ENCODE measurements at regions of chr12 and their contacts with region 1.

Region 1: DNA sequence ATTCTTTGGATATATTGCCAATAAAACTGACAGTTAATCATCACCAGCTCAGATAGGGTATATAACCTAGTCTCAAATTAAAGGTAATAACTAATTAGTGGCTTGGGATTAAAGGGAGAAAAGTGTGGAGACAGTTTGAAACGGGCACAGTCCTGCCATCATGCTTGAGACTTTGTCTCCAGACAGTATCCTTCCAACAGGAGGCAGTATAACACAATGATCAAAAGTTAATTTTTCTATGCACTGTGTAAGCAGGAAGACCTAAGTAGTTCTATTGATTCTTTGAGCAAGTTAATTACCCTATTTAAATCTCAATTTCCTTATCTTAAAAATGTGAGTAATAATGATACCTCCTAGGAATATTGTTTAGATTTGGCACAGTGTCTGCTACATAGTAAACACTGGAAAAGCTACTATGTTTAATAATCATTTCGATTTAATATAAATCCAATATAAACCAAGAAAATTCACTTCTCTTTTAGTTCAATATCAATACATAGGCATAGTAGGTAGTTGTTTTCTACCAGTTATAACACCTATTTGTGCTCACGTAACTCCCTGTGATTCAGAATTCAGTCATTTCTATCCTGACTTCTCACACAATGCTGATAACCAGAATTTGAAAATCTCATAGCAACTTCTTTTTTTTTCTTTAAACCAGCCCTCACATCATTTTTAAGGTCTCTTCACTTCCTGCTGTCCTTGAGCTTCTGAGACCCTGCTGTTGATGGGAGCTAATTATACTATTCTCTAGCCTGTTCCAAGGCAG is 53.7 kb downstream of the GALNT4 start:
- DNase-seq: peak in 2 of 9 experiments; percentile 62 to 73
- ATAC-seq: peak; percentile 71
- H3K4me3 ChIP-seq: no peak overlapping the region
- H3K4me3 Mint-ChIP-seq: no peak overlapping the region
- H3K27ac ChIP-seq: peak overlapping the region in 1 of 2 experiments; percentile 30
- H3K27ac Mint-ChIP-seq: peak overlapping the region; percentile 67
- H3K4me1 ChIP-seq: peaks cover 30% of the 10 kb centered on the region
- H3K4me1 Mint-ChIP-seq: peaks cover 55% of the 10 kb centered on the region
- H3K27me3 ChIP-seq: no peaks in the 10 kb centered on the region
- H3K27me3 Mint-ChIP-seq: no peaks in the 10 kb centered on the region
- CTCF ChIP-seq: peak; percentile 70

Region 2: GRCh38 chr12:89352492-89353187 is 118.3 kb before region 1 on chr12 and contains the start of gene DUSP6:
- CTCF ChIA-PET with region 1: no interaction called
- POLR2A ChIA-PET with region 1: interaction called, 4 read pairs
- intact Hi-C with region 1: loop called in 1 of 2 experiments (anchors 5 kb)
- DNase-seq: peak; percentile 55 to 91 (median 76)
- ATAC-seq: peak; percentile 71
- H3K4me3 ChIP-seq: peak within 1 kb of the TSS; percentile 54 to 74
- H3K4me3 Mint-ChIP-seq: peak within 1 kb of the TSS; percentile 91
- H3K27ac ChIP-seq: peak within 1 kb of the TSS; percentile 45 to 55
- H3K27ac Mint-ChIP-seq: peak within 1 kb of the TSS; percentile 88
- H3K4me1 ChIP-seq: peaks cover 24% of the 10 kb centered on the region
- H3K4me1 Mint-ChIP-seq: peaks cover 43% of the 10 kb centered on the region
- H3K27me3 ChIP-seq: no peaks in the 10 kb centered on the region
- H3K27me3 Mint-ChIP-seq: peaks cover 3% of the 10 kb centered on the region
- CTCF ChIP-seq: no peak
- total RNA-seq, gene DUSP6: 3.0 to 3.9 TPM

Region 3: GRCh38 chr12:89524541-89525285 is 53.8 kb after region 1 on chr12 and contains the start of gene GALNT4:
- CTCF ChIA-PET with region 1: interaction called, 89 read pairs
- POLR2A ChIA-PET with region 1: interaction called, 11 read pairs
- intact Hi-C with region 1: loop called (anchors 1 kb)
- DNase-seq: peak; percentile 45 to 88 (median 74)
- ATAC-seq: peak; percentile 70
- H3K4me3 ChIP-seq: peak within 1 kb of the TSS; percentile 78 to 93
- H3K4me3 Mint-ChIP-seq: peak within 1 kb of the TSS; percentile 92
- H3K27ac ChIP-seq: peak within 1 kb of the TSS; percentile 70 to 86
- H3K27ac Mint-ChIP-seq: peak within 1 kb of the TSS; percentile 87
- H3K4me1 ChIP-seq: peaks cover 28% of the 10 kb centered on the region
- H3K4me1 Mint-ChIP-seq: peaks cover 61% of the 10 kb centered on the region
- H3K27me3 ChIP-seq: no peaks in the 10 kb centered on the region
- H3K27me3 Mint-ChIP-seq: no peaks in the 10 kb centered on the region
- CTCF ChIP-seq: peak; percentile 41
- total RNA-seq, gene GALNT4: 4.6 to 5.3 TPM

Region 4: GRCh38 chr12:89574736-89575208 is 103.8 kb after region 1 on chr12:
- CTCF ChIA-PET with region 1: no interaction called
- POLR2A ChIA-PET with region 1: no interaction called
- intact Hi-C with region 1: no loop called
- DNase-seq: no peak
- ATAC-seq: no peak
- H3K4me3 ChIP-seq: no peak overlapping the region
- H3K4me3 Mint-ChIP-seq: no peak overlapping the region
- H3K27ac ChIP-seq: no peak overlapping the region
- H3K27ac Mint-ChIP-seq: no peak overlapping the region
- H3K4me1 ChIP-seq: no peaks in the 10 kb centered on the region
- H3K4me1 Mint-ChIP-seq: no peaks in the 10 kb centered on the region
- H3K27me3 ChIP-seq: no peaks in the 10 kb centered on the region
- H3K27me3 Mint-ChIP-seq: no peaks in the 10 kb centered on the region
- CTCF ChIP-seq: no peak

Region 5: GRCh38 chr12:89597770-89598169 is 126.8 kb after region 1 on chr12:
- CTCF ChIA-PET with region 1: no interaction called
- POLR2A ChIA-PET with region 1: no interaction called
- intact Hi-C with region 1: loop called in 1 of 2 experiments (anchors 2 kb)
- DNase-seq: peak in 1 of 9 experiments; percentile 24
- ATAC-seq: no peak
- H3K4me3 ChIP-seq: no peak overlapping the region
- H3K4me3 Mint-ChIP-seq: no peak overlapping the region
- H3K27ac ChIP-seq: no peak overlapping the region
- H3K27ac Mint-ChIP-seq: no peak overlapping the region
- H3K4me1 ChIP-seq: peaks cover 6% of the 10 kb centered on the region
- H3K4me1 Mint-ChIP-seq: peaks cover 14% of the 10 kb centered on the region
- H3K27me3 ChIP-seq: no peaks in the 10 kb centered on the region
- H3K27me3 Mint-ChIP-seq: no peaks in the 10 kb centered on the region
- CTCF ChIP-seq: no peak

Region 6: DNA sequence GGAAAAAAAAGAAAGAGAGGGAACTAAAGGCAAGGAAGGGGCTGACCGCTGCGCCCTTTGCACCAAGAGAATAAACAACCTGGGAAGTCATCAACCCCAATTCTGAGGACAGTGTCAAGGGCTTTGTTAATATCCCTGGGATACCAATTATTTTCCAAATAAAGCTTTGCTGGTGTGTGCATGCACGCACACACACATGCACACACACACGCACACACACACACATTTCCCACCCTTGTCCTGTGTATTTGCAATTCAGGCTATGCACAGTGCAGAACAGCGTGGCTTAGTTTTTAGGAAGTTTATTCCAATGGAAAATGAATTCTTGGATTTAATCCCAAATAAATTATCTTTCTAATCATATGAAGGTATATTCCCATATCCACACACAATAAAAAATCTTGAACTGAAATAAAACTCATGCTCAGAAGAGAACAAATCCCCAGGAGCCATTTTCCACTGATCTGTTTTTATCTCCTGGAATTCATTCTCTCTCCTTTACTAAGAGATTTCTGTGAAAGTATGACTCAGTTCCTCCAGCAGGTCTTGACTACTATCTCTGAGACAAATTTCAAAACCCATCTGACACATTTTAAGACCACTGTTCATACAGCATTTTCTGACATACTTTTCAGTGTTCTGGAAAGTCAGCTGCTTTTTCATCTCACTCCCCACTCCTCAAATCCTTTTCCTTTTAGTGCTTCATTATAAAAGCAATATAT is 572.2 kb after region 1 on chr12:
- CTCF ChIA-PET with region 1: no interaction called
- POLR2A ChIA-PET with region 1: no interaction called
- intact Hi-C with region 1: no loop called
- DNase-seq: no peak
- ATAC-seq: no peak
- H3K4me3 ChIP-seq: no peak overlapping the region
- H3K4me3 Mint-ChIP-seq: no peak overlapping the region
- H3K27ac ChIP-seq: no peak overlapping the region
- H3K27ac Mint-ChIP-seq: no peak overlapping the region
- H3K4me1 ChIP-seq: no peaks in the 10 kb centered on the region
- H3K4me1 Mint-ChIP-seq: no peaks in the 10 kb centered on the region
- H3K27me3 ChIP-seq: no peaks in the 10 kb centered on the region
- H3K27me3 Mint-ChIP-seq: no peaks in the 10 kb centered on the region
- CTCF ChIP-seq: no peak

Region 7: GRCh38 chr12:90102957-90103652 is 632.2 kb after region 1 on chr12:
- CTCF ChIA-PET with region 1: no interaction called
- POLR2A ChIA-PET with region 1: no interaction called
- intact Hi-C with region 1: loop called (anchors 10 kb)
- DNase-seq: peak in 3 of 9 experiments; percentile 6 to 65 (median 53)
- ATAC-seq: peak; percentile 56
- H3K4me3 ChIP-seq: no peak overlapping the region
- H3K4me3 Mint-ChIP-seq: peak overlapping the region; percentile 68
- H3K27ac ChIP-seq: no peak overlapping the region
- H3K27ac Mint-ChIP-seq: no peak overlapping the region
- H3K4me1 ChIP-seq: no peaks in the 10 kb centered on the region
- H3K4me1 Mint-ChIP-seq: peaks cover 4% of the 10 kb centered on the region
- H3K27me3 ChIP-seq: no peaks in the 10 kb centered on the region
- H3K27me3 Mint-ChIP-seq: peaks cover 2% of the 10 kb centered on the region
- CTCF ChIP-seq: peak; percentile 70

Measured in CD8-positive, alpha-beta T cell (primary cell).